Mammary epithelial cell (primary cell): ENCODE measurements at regions of chr11 and their contacts with region 1.

Region 1: GRCh38 chr11:65817835-65818742 is 15.7 kb upstream of the SNX32 start:
- DNase-seq: peak; percentile 82
- H3K4me3 ChIP-seq: peak overlapping the region; percentile 61 to 70 (median 64)
- H3K27ac ChIP-seq: peak overlapping the region; percentile 85
- H3K4me1 ChIP-seq: peaks cover 7% of the 10 kb centered on the region
- H3K27me3 ChIP-seq: no peaks in the 10 kb centered on the region
- CTCF ChIP-seq: peak; percentile 88 to 97

Region 2: GRCh38 chr11:65652511-65653231 is 165.4 kb before region 1 on chr11:
- CTCF ChIA-PET with region 1: interaction called, 10 read pairs
- dilution Hi-C with region 1: no loop called
- in situ Hi-C with region 1: no loop called
- intact Hi-C with region 1: no loop called
- DNase-seq: peak; percentile 77
- H3K4me3 ChIP-seq: peak overlapping the region; percentile 26 to 58 (median 47)
- H3K27ac ChIP-seq: peak overlapping the region; percentile 47
- H3K4me1 ChIP-seq: peaks cover 45% of the 10 kb centered on the region
- H3K27me3 ChIP-seq: no peaks in the 10 kb centered on the region
- CTCF ChIP-seq: no peak

Region 3: GRCh38 chr11:65743928-65744698 is 74.0 kb before region 1 on chr11:
- CTCF ChIA-PET with region 1: interaction called, 4 read pairs
- dilution Hi-C with region 1: no loop called
- in situ Hi-C with region 1: no loop called
- intact Hi-C with region 1: loop called (anchors 1 kb)
- DNase-seq: no peak
- H3K4me3 ChIP-seq: no peak overlapping the region
- H3K27ac ChIP-seq: no peak overlapping the region
- H3K4me1 ChIP-seq: no peaks in the 10 kb centered on the region
- H3K27me3 ChIP-seq: no peaks in the 10 kb centered on the region
- CTCF ChIP-seq: peak in 1 of 2 donors; percentile 33

Region 4: GRCh38 chr11:65779851-65780577 is 38.1 kb before region 1 on chr11:
- CTCF ChIA-PET with region 1: interaction called, 6 read pairs
- dilution Hi-C with region 1: no loop called
- in situ Hi-C with region 1: loop called in 1 of 2 experiments (anchors 5 kb)
- intact Hi-C with region 1: loop called (anchors 1 kb)
- DNase-seq: peak; percentile 74
- H3K4me3 ChIP-seq: peak overlapping the region; percentile 83 to 93 (median 86)
- H3K27ac ChIP-seq: peak overlapping the region; percentile 90
- H3K4me1 ChIP-seq: peaks cover 40% of the 10 kb centered on the region
- H3K27me3 ChIP-seq: no peaks in the 10 kb centered on the region
- CTCF ChIP-seq: peak; percentile 87 to 92

Region 5: DNA sequence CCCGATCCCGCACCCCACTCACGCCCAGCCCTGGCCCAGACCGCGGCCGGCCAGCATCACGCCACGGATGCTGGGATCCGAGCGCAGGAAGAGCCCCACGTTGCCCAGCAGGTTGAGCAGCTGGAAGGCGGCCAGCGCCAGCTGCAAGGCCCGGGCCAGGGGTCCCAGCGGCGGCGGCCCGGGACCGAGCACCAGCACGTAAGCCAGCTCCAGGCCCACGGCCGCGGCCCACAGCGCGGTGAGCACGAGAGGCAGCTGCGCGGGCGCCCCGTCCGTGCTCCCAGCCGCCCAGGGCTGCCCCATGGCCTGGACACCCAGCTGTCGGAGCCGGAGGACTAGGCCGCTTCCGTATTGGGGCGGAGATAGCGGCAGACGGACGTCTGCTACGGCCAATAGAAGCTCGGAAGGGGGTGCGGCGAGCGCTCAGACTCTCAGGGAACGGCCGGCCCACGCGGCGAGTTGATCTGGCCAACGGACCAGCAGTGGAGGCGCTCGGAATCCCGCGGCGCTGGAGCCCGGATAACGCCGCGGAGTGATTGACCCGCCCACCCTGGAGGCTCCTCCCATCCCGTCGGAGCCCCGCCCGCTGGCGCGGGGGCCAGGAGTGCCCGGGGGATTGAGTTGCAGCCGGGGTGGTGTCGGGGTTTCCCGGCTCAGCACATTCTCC is 727.7 kb after region 1 on chr11 and contains the start of gene ZDHHC24:
- CTCF ChIA-PET with region 1: interaction called, 10 read pairs
- dilution Hi-C with region 1: no loop called
- in situ Hi-C with region 1: no loop called
- intact Hi-C with region 1: no loop called
- DNase-seq: peak; percentile 97
- H3K4me3 ChIP-seq: peak within 1 kb of the TSS; percentile 56 to 93 (median 82)
- H3K27ac ChIP-seq: peak within 1 kb of the TSS; percentile 46
- H3K4me1 ChIP-seq: peaks cover 18% of the 10 kb centered on the region
- H3K27me3 ChIP-seq: no peaks in the 10 kb centered on the region
- CTCF ChIP-seq: no peak
- total RNA-seq, gene ZDHHC24: 11.0 to 16.8 TPM